T-cell (primary cell): ENCODE measurements at regions of chr7 and their contacts with region 1.

Region 1: GRCh38 chr7:117012696-117013095 is 59.4 kb downstream of the ST7 start:
- DNase-seq: peak in 1 of 35 experiments; percentile 50
- ATAC-seq: peak in 1 of 4 experiments; percentile 38
- H3K4me3 ChIP-seq: no peak overlapping the region
- H3K4me3 Mint-ChIP-seq: no peak overlapping the region
- H3K27ac ChIP-seq: no peak overlapping the region
- H3K27ac Mint-ChIP-seq: no peak overlapping the region
- H3K4me1 ChIP-seq: peaks cover 24 to 43% of the 10 kb centered on the region in 2 experiments
- H3K4me1 Mint-ChIP-seq: peaks cover 49 to 69% (median 67%) of the 10 kb centered on the region in 3 donors
- H3K27me3 ChIP-seq: peaks cover 0 to 7% of the 10 kb centered on the region in 2 experiments
- H3K27me3 Mint-ChIP-seq: peaks cover 0 to 4% of the 10 kb centered on the region in 2 donors

Region 2: GRCh38 chr7:116862951-116863670 is 149.6 kb before region 1 on chr7:
- CTCF ChIA-PET with region 1: no interaction called
- POLR2A ChIA-PET with region 1: interaction called, 9 to 20 read pairs
- DNase-seq: peak in 1 of 35 experiments; percentile 18
- ATAC-seq: no peak
- H3K4me3 ChIP-seq: peak overlapping the region; percentile 67 to 83
- H3K4me3 Mint-ChIP-seq: peak overlapping the region; percentile 95 to 99 (median 99)
- H3K27ac ChIP-seq: peak overlapping the region; percentile 36
- H3K27ac Mint-ChIP-seq: peak overlapping the region; percentile 91 to 94
- H3K4me1 ChIP-seq: peaks cover 22 to 23% of the 10 kb centered on the region in 2 experiments
- H3K4me1 Mint-ChIP-seq: peaks cover 51 to 59% (median 56%) of the 10 kb centered on the region in 3 donors
- H3K27me3 ChIP-seq: no peaks in the 10 kb centered on the region
- H3K27me3 Mint-ChIP-seq: peaks cover 0 to 3% of the 10 kb centered on the region in 2 donors

Region 3: DNA sequence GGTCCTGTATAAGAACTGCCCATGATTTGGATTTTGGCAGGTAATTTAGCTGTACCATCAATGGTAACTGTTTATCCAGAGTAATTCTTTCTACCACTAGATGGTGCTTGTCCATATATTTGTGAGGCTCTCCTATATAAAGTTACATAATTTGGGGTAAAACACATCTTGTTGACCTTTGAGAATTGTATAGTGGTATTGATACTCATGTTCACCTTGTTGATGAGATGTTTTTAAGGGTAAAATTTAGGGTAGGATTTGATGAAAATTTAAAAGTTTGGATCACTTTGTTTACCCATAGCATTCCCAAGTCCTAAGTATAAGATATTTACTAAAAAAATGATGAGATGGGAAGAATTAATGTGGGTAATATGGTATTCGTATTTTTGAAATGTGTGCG is 27.8 kb before region 1 on chr7:
- CTCF ChIA-PET with region 1: interaction called, 10 to 12 read pairs
- POLR2A ChIA-PET with region 1: interaction called in 1 of 2 experiments, 3 read pairs
- DNase-seq: peak in 1 of 35 experiments; percentile 62
- ATAC-seq: peak in 2 of 4 experiments; percentile 59 to 66
- H3K4me3 ChIP-seq: no peak overlapping the region
- H3K4me3 Mint-ChIP-seq: no peak overlapping the region
- H3K27ac ChIP-seq: no peak overlapping the region
- H3K27ac Mint-ChIP-seq: no peak overlapping the region
- H3K4me1 ChIP-seq: no peaks in the 10 kb centered on the region
- H3K4me1 Mint-ChIP-seq: peaks cover 2 to 4% (median 3%) of the 10 kb centered on the region in 3 donors
- H3K27me3 ChIP-seq: no peaks in the 10 kb centered on the region
- H3K27me3 Mint-ChIP-seq: no peaks in the 10 kb centered on the region

Region 4: DNA sequence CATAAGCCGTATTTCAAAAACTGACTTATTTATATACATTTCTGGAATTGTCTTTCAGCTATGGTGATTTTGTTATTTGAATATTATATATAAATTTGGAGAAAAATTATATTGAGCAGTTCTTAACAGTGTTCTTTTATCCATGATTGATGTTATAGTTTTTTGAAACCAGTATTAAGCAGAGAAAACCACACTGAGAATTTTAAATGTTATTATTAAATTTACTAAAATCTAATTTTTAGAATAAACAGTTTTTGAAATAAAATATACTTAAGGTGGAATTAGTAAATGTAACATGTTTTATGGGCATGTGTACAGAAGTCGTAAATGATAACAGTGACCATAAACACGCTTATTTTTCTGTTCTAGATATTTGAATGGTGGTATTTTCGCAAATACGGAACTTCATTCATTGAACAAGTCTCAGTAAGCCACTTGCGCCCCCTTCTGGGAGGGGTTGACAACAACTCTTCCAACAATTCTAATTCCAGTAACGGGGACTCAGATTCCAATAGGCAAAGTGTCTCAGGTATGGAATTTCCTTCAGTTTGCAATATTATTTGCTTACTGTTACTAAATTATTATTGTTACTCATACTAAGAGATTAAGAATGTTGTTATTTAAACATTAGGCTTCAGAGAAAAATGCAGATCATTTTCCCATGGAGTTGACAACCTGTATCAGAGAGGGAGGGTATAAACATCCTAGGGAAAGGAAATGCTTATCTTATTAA is 106.7 kb after region 1 on chr7:
- CTCF ChIA-PET with region 1: interaction called, 5 to 27 read pairs
- POLR2A ChIA-PET with region 1: no interaction called
- DNase-seq: peak; percentile 42 to 85 (median 71)
- ATAC-seq: peak in 1 of 4 experiments; percentile 32
- H3K4me3 ChIP-seq: no peak overlapping the region
- H3K4me3 Mint-ChIP-seq: no peak overlapping the region
- H3K27ac ChIP-seq: no peak overlapping the region
- H3K27ac Mint-ChIP-seq: no peak overlapping the region
- H3K4me1 ChIP-seq: peaks cover 0 to 2% of the 10 kb centered on the region in 2 experiments
- H3K4me1 Mint-ChIP-seq: no peaks in the 10 kb centered on the region
- H3K27me3 ChIP-seq: no peaks in the 10 kb centered on the region
- H3K27me3 Mint-ChIP-seq: no peaks in the 10 kb centered on the region

Region 5: DNA sequence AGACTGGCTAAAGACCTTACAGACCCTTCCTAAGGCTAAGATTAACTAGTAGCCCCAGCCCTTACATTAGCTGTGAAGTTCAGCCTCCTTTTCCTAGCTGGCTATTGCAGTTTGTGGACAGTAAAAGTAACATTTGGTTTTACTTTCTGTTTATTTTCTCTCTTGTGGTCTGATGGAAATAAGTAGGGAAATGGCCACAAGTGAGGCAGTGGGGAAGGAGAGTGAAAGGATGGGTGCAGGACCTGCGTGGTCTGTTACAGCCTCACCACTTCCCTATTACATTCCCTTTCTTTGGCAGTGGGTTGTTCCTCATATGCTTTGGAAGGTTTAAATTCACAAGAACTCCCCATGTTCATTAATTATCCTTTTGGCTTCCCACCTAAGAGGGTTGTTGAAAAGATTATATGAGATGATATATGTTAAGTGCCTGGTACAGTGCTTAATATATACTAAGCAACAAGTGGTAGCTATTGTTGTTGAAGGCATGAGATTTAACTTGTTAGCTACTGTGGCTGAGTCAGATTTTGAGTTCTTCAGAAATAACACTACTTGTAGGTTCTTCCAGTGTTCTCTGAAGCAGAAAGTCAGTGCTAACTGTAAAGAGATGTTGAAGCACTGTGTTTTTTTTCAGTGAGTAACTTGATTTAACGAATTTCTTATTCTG is 122.3 kb after region 1 on chr7:
- CTCF ChIA-PET with region 1: interaction called, 3 to 5 read pairs
- POLR2A ChIA-PET with region 1: interaction called in 1 of 2 experiments, 16 read pairs
- DNase-seq: no peak
- ATAC-seq: no peak
- H3K4me3 ChIP-seq: no peak overlapping the region
- H3K4me3 Mint-ChIP-seq: no peak overlapping the region
- H3K27ac ChIP-seq: no peak overlapping the region
- H3K27ac Mint-ChIP-seq: no peak overlapping the region
- H3K4me1 ChIP-seq: no peaks in the 10 kb centered on the region
- H3K4me1 Mint-ChIP-seq: peaks cover 3 to 8% (median 3%) of the 10 kb centered on the region in 3 donors
- H3K27me3 ChIP-seq: no peaks in the 10 kb centered on the region
- H3K27me3 Mint-ChIP-seq: no peaks in the 10 kb centered on the region